Stomach (tissue), 19 donors: ENCODE measurements at regions of chr20 and their contacts with region 1.

Region 1: GRCh38 chr20:36141310-36141709 is 13.2 kb upstream of the EPB41L1 start:
- DNase-seq: no peak
- H3K4me3 ChIP-seq: no peak overlapping the region
- H3K27ac ChIP-seq: no peak overlapping the region
- H3K4me1 ChIP-seq: peaks cover 15 to 32% (median 27%) of the 10 kb centered on the region in 4 donors
- H3K27me3 ChIP-seq: no peaks in the 10 kb centered on the region
- CTCF ChIP-seq: no peak
- EP300 ChIP-seq: no peak
- POLR2A ChIP-seq: no peak

Region 2: DNA sequence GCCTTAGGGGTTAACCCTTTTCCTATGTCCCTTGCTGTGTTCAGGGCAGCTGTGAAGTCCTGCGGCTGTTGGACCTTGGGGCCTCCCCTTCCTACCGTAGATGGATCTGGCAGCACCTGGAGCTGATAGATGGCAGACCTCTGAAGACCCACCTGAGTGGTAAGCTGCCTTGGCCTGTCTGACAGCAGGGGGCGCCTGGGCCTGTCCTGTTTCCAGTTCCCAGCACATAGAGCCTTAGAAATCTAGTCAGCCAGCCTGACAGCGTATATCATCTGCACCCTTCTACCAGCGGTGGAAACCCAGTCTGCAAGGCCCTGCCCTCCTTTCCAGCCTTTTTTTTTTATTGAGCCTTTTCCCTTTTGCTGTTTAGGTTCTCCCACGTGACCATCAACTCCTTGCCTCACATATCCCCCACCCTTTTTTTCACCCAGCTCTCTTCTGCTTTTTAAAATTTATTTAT is 146.3 kb before region 1 on chr20:
- intact Hi-C with region 1: loop called (anchors 2 kb)
- DNase-seq: peak; percentile 90 to 94
- H3K4me3 ChIP-seq: no peak overlapping the region
- H3K27ac ChIP-seq: no peak overlapping the region
- H3K4me1 ChIP-seq: peaks cover 0 to 6% (median 0%) of the 10 kb centered on the region in 4 donors
- H3K27me3 ChIP-seq: no peaks in the 10 kb centered on the region
- CTCF ChIP-seq: peak in 5 of 7 experiments; percentile 81 to 92 (median 85)
- EP300 ChIP-seq: no peak
- POLR2A ChIP-seq: no peak